ENCODE measurements at regions of chr7 and their contacts with region 1.

Region 1: DNA sequence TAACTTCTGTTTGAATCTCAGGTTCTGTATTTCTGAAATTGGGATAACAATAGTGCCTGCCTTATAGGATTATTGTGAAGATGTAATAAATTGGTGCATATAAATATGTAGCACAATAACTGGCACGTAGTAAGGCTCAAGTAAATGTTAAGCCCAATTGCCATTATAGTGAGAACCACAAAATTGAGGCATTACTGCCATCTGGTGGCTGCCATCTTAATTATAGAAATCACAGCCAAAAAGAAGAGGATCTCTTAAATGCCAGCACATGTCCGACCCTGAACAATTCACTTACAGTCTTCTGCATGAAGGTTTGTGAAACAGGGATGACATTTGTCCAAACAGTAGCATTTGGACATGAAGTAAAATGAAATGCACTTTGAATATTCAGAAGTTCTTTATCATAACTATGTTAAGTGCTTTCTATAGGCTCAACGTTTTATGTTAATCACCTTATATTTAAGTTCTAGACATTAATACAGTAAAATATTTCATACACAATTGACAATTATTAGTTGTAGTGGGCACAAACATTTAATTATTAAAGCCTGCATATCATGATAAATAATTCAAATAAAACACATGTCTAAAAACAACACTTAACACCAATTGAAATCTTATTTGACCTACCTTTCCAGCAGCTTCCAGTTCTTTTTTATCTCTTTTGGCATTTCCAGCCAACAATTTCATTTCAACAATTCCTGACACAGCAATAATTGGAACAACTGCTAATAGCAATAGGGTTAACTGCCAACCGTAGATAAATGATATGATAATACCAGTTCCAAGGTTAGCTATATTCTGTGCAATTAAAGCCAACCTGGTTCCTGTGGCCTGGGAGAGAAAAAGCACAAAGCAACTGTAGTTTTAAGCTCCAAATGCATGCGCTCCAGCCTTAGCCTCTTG is 58.5 kb downstream of the ABCB4 start:
- DNase-seq: peak; percentile 56 to 83 (median 71)
- H3K4me3 ChIP-seq: no peak overlapping the region
- H3K27ac ChIP-seq: no peak overlapping the region
- H3K4me1 ChIP-seq: peaks cover 0 to 8% of the 10 kb centered on the region in 2 donors
- H3K27me3 ChIP-seq: no peaks in the 10 kb centered on the region
- CTCF ChIP-seq: peak; percentile 59 to 89 (median 84)
- POLR2A ChIP-seq: no peak

Region 2: DNA sequence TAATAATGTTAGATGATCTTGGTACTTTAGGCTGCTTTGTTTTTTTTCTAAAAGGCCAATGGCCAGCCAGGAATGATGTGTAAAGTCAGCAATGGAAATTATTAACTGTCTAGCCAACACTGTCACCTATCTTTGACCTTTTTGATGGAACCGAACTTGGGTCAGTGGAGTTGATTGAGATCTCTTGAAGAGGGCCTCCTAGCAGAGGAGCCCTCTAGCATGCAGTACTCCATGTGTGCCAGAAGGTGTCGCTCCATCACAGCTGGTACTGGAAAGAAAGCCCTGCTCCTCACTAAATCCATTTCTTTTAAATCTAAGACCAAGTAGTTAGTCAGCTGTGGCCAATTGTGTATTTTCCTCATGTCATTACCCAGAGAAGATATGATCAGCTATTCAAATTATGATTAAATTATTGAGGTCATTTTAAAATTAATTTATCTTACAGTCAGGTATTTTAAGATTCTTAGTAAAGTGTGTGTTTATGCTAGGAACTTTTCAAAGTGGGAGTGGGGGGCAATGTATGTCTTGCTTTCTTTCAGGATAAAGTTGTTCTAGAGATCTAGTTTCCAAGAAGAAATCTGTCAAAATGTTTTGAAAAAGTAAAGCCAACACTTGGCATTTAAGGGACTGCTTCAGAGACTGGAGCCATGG is 104.6 kb before region 1 on chr7:
- intact Hi-C with region 1: loop called (anchors 2 to 5 kb)
- DNase-seq: peak; percentile 56 to 85 (median 68)
- H3K4me3 ChIP-seq: no peak overlapping the region
- H3K27ac ChIP-seq: no peak overlapping the region
- H3K4me1 ChIP-seq: peaks cover 7 to 13% of the 10 kb centered on the region in 2 donors
- H3K27me3 ChIP-seq: no peaks in the 10 kb centered on the region
- CTCF ChIP-seq: peak; percentile 96 to 99 (median 97)
- POLR2A ChIP-seq: no peak

Measured in adrenal gland (tissue), 19 donors.